Activated CD4-positive, alpha-beta T cell treated with anti-CD3 and anti-CD28 coated beads, Interleukin-2, amount 10 ng/mL, durations not matched to agents 24 days and 14 days (primary cell): ENCODE measurements at regions of chr17 and their contacts with region 1.

Region 1: DNA sequence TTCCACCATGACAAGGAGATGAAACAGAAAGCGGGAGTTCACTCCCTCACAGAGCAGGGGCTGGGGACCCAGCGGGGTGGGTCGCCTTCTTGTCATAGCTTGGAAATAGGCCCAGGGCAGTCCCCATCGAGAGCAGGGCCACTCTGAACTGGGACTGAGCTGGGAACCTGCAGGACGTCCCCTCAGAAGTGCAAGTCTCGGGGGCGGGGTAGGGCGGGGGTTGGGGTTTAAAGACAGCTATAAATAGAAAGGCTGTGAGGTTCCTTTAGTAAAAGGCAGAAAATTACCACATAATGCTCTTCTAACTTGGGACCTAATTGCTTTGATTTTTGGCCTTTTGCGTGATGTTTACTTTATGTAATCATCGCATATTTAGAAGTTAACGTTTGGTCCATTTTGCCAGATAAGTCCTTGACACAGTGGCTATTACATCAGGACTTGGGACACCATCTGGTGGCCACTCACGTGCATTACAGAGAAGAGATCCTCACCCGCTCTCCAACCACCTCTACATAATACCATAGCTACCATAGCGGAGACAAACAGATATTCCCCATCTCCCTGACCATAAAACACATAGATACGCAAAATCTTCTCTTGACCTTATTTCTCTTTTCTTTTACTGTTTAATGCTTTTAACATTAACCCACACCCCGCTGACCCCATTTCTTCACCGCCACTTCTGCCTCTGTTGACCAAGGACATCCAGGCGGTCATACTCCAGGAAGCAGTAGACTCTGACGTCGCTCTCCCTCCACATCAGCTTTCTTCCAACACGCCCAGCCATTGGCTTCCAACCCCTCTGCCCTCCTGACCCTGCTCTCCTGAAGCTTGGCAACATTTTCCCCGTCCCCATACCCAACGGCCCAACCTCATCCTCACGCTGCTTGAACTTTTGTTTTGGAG is 27.5 kb upstream of the PIK3R6 start:
- DNase-seq: peak; percentile 83
- H3K4me3 Mint-ChIP-seq: no peak overlapping the region
- H3K27ac Mint-ChIP-seq: peak overlapping the region; percentile 16
- H3K4me1 Mint-ChIP-seq: peaks cover 65% of the 10 kb centered on the region
- H3K27me3 Mint-ChIP-seq: no peaks in the 10 kb centered on the region

Region 2: DNA sequence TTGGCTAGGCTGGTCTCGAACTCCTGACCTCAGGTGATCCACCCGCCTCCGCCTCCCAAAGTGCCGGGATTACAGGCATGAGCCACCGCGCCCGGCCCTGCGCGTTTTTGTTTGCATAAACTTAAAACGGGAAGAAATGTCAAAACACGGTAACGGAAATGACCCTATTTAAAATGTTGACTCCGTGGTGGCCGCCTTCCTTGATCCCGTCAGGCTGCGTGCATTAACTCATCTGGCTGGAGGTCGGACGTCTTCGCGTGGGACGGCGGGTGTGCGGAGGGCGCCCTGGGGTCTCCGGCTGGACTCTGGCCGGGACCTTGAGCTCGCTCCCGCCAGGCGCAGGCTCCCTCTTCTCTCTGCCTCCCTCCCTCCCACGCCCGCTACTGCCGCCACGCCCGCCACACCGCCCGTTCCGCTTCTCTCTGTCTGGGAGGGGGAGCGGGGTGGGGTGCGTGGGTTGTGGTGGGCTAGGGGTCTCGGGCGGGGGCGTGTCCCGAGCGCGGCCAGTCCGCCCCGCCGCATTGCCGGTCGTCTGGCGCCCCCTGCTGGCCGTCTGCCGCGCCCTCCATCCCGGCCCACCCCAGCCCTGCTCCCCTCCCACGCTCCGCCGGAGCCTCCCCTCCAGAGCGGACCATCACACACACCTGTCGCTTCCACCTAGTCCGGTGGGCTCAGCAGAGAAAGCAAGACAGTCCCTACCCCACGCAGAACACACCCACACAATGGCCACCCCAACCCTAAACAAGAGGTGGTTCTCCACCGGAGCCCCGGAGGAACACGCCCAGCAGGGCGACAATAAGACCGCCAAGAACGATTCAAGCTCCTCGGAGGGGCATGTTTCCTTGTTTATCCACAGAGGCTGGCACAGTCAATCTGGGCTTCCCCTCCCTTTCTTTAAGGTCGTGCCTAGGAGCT is 149.1 kb before region 1 on chr17:
- intact Hi-C with region 1: loop called (anchors 10 kb)
- DNase-seq: peak; percentile 93
- H3K4me3 Mint-ChIP-seq: peak overlapping the region; percentile 87
- H3K27ac Mint-ChIP-seq: peak overlapping the region; percentile 80
- H3K4me1 Mint-ChIP-seq: peaks cover 9% of the 10 kb centered on the region
- H3K27me3 Mint-ChIP-seq: peaks cover 17% of the 10 kb centered on the region

Region 3: GRCh38 chr17:8857919-8858318 is 37.0 kb before region 1 on chr17:
- intact Hi-C with region 1: loop called (anchors 2 kb)
- DNase-seq: peak; percentile 87
- H3K4me3 Mint-ChIP-seq: peak overlapping the region; percentile 67
- H3K27ac Mint-ChIP-seq: peak overlapping the region; percentile 91
- H3K4me1 Mint-ChIP-seq: peaks cover 56% of the 10 kb centered on the region
- H3K27me3 Mint-ChIP-seq: no peaks in the 10 kb centered on the region

Region 4: GRCh38 chr17:8941520-8941919 is 46.6 kb after region 1 on chr17:
- intact Hi-C with region 1: loop called (anchors 2 kb)
- DNase-seq: peak; percentile 92
- H3K4me3 Mint-ChIP-seq: peak overlapping the region; percentile 79
- H3K27ac Mint-ChIP-seq: peak overlapping the region; percentile 98
- H3K4me1 Mint-ChIP-seq: peaks cover 68% of the 10 kb centered on the region
- H3K27me3 Mint-ChIP-seq: no peaks in the 10 kb centered on the region

Region 5: DNA sequence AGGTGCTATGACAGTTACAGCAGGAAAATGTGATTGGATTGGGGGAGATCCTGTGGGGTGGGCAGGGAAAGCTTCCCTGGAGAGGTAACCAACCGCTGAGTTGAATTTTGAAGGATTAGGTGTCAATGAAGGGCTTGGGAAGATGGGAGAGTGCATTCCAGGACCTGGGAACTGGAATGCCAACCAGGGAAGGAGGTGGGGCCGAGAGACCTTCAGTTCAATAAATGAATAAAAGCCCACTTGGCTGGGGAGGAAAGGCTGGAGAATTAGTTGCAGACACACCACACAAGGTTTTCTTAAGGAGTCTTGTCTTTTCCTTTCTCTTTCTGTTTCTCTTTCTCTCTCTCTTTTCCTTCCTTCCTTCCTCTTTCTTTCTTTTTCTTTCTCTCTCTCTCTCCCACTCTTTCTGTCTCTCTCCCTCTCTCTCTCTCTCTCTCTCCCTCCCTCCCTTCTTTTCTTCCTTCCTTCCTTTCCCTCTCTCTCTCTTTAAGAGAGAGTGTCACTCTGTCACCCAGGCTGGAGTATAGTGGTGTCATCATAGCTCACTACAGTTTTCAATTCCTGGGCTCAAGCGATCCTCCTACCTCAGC is 753.7 kb after region 1 on chr17:
- intact Hi-C with region 1: no loop called
- DNase-seq: no peak
- H3K4me3 Mint-ChIP-seq: no peak overlapping the region
- H3K27ac Mint-ChIP-seq: no peak overlapping the region
- H3K4me1 Mint-ChIP-seq: peaks cover 14% of the 10 kb centered on the region
- H3K27me3 Mint-ChIP-seq: peaks cover 40% of the 10 kb centered on the region